ENCODE measurements at regions of chr12 and their contacts with region 1.

Region 1: GRCh38 chr12:26523708-26524150 is 309.3 kb downstream of the ITPR2 start:
- DNase-seq: no peak
- H3K4me3 Mint-ChIP-seq: no peak overlapping the region
- H3K27ac Mint-ChIP-seq: no peak overlapping the region
- H3K4me1 Mint-ChIP-seq: peaks cover 6% of the 10 kb centered on the region
- H3K27me3 Mint-ChIP-seq: no peaks in the 10 kb centered on the region

Region 2: GRCh38 chr12:25855716-25856115 is 668.0 kb before region 1 on chr12:
- intact Hi-C with region 1: no loop called
- DNase-seq: no peak
- H3K4me3 Mint-ChIP-seq: no peak overlapping the region
- H3K27ac Mint-ChIP-seq: no peak overlapping the region
- H3K4me1 Mint-ChIP-seq: peaks cover 4% of the 10 kb centered on the region
- H3K27me3 Mint-ChIP-seq: peaks cover 3% of the 10 kb centered on the region

Region 3: GRCh38 chr12:26113853-26114719 is 409.6 kb before region 1 on chr12:
- intact Hi-C with region 1: loop called (anchors 10 kb)
- DNase-seq: peak; percentile 84
- H3K4me3 Mint-ChIP-seq: peak overlapping the region; percentile 75
- H3K27ac Mint-ChIP-seq: no peak overlapping the region
- H3K4me1 Mint-ChIP-seq: peaks cover 6% of the 10 kb centered on the region
- H3K27me3 Mint-ChIP-seq: peaks cover 77% of the 10 kb centered on the region

Region 4: DNA sequence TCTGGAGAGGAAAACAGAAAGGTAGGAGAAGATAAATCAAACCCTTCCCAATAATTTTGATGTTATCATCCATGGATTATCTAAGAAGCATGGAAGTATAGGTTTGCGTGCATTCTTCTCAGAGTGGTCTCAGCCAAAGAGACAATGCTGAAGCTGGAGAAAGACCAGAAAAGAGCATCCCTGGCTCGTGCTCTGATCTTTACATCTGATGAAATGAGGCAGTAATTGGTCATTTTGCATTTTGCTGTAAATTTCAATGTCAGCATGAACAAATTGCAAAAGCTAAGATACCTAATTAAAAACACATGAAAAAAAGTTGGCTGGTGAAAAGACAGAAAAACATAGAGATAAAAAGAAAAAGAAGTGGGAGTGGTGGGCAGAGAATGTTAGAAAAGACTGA is 56.9 kb after region 1 on chr12:
- intact Hi-C with region 1: no loop called
- DNase-seq: no peak
- H3K4me3 Mint-ChIP-seq: no peak overlapping the region
- H3K27ac Mint-ChIP-seq: no peak overlapping the region
- H3K4me1 Mint-ChIP-seq: peaks cover 9% of the 10 kb centered on the region
- H3K27me3 Mint-ChIP-seq: no peaks in the 10 kb centered on the region

Measured in activated CD4-positive, alpha-beta T cell treated with anti-CD3 and anti-CD28 coated beads, Interleukin-2, amount 10 ng/mL, durations not matched to agents 24 days and 14 days (primary cell).